Spleen (tissue), 13 donors: ENCODE measurements at regions of chr3 and their contacts with region 1.

Region 1: DNA sequence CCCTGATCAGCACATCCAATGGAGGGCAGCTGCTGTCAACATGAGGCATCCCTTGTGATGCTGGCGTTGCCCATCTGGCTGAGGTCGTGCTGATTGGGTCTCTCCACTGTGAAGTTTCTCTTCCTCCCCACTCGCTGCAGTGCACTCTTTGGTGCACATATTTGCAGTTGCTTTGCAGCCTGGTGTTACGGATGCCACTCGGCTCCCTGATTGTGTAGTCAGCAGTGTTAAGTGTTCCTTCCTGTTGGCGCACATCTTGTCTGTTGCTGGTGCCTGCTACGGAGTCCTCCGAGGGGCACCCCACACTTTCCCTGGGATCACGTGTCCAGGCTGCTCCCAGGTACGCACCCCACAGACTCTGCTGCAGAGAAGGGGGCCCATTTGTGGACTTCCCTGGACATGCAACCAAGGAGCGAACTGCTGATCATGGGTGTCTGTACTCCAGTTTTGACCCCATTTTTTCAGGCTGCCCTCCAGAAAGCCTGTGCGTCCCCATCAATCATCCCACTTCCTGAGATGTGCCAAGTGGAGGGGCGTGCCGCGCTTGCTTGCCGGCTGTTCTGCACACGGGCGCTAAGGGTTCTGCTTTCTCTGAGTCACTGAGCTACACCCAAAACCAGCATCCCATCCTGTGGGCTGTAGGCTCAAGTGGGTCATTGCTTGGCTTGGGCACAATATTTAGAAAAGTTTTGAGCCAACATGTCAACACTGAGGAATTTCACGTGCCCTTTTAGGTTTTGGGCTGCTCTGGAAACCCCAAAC is 98.6 kb downstream of the FBLN2 start:
- DNase-seq: no peak
- H3K4me3 ChIP-seq: peak overlapping the region in 1 of 8 donors; percentile 22
- H3K27ac ChIP-seq: no peak overlapping the region
- H3K4me1 ChIP-seq: peaks cover 19 to 49% (median 35%) of the 10 kb centered on the region in 6 donors
- H3K27me3 ChIP-seq: peaks cover 0 to 59% (median 6%) of the 10 kb centered on the region in 7 donors
- CTCF ChIP-seq: no peak
- POLR2A ChIP-seq: no peak

Region 2: GRCh38 chr3:12706504-12707253 is 940.8 kb before region 1 on chr3:
- intact Hi-C with region 1: no loop called
- DNase-seq: no peak
- H3K4me3 ChIP-seq: no peak overlapping the region
- H3K27ac ChIP-seq: peak overlapping the region in 1 of 8 donors; percentile 12
- H3K4me1 ChIP-seq: peaks cover 0 to 7% (median 0%) of the 10 kb centered on the region in 6 donors
- H3K27me3 ChIP-seq: no peaks in the 10 kb centered on the region
- CTCF ChIP-seq: peak; percentile 44 to 87 (median 59)
- POLR2A ChIP-seq: no peak

Region 3: DNA sequence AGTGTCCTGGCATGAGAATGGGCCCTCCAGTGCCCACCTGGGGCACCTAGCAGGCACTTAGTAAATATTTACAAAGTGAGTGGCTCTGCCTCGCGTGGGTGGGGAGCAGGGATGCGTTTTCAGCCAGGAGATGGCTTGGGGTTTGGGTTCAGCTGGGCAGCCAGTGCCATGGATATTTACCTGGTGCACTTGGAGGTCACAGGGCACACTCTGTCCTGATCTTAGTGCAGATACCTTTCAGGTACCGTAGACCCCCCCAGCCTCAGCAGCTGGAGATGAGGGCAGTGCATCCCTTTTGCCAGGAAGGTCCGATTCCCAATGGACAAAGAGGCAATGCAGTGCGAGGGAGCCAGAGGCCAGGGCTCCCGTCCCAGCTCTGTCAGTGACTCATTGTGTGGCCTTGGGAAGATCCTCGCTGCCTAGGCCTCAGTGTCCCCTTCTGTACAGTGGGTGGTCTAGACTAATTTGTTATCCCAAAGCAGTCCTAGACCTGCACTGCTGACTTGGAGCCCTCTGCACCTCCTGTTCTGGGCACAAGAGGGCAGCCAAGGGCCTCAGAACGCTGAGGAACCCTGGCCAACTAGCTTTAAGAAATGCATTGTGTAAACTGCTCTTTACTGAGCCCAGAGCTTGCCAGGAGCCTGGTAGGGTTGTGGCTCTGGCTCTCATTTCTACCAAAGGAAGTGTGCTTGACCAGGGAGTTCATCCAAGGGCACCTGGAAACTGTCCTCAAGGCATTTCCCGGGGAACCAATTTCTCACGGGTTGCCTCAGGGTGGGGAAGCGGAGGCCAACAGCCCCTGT is 151.4 kb before region 1 on chr3:
- intact Hi-C with region 1: loop called (anchors 2 kb)
- DNase-seq: peak; percentile 88
- H3K4me3 ChIP-seq: no peak overlapping the region
- H3K27ac ChIP-seq: no peak overlapping the region
- H3K4me1 ChIP-seq: peaks cover 0 to 16% (median 7%) of the 10 kb centered on the region in 6 donors
- H3K27me3 ChIP-seq: no peaks in the 10 kb centered on the region
- CTCF ChIP-seq: peak; percentile 83 to 96 (median 92)
- POLR2A ChIP-seq: no peak

Region 4: DNA sequence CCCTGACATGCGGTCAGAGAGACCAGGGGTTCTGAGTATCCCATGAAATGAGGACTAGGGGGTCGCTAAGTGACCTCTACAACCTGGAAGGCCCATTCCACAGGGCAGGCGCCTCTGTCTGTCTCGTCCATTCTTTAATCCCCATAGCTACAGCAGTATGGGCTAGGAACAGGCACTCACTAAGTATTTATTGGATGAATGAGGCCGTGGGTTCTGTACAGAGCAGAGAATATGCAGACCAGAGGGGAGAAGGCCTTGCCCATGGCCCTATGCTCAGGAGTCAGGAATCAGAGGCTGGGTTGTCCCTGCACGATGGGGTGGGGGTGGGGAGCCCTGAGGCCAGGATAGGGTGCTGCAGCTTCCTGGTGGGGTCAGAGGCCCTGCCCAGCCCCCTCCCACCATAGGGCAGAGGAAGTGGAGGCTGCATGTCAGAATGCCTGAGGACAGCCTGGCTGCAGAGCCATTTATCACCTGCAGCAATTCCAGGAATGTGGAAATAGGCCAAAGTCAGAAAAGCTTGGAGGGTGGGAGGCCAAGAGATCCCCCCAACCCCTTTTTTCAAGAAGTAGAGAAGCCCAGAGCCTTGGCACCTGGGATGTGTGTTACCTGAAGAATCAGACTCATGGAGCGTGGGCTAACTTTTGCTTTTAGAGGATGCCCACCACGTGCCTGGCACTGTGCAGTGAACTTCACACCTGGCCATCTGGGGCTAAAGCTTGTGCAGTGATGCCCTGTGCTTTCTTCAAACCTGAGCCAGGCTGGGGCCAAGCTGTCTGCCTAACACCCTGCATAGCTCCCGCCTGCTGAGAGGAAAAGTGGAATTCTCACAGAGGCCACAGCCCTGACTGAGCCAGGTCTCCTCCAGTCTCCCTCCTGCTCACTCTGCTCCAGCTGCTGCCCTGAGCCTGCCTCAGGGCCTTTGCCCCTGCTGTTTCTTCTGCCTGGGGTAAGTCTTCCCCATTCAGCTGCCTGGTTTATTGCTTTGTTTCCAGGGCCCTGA is 123.0 kb after region 1 on chr3:
- intact Hi-C with region 1: no loop called
- DNase-seq: no peak
- H3K4me3 ChIP-seq: no peak overlapping the region
- H3K27ac ChIP-seq: no peak overlapping the region
- H3K4me1 ChIP-seq: no peaks in the 10 kb centered on the region
- H3K27me3 ChIP-seq: peaks cover 0 to 24% (median 0%) of the 10 kb centered on the region in 7 donors
- CTCF ChIP-seq: no peak
- POLR2A ChIP-seq: no peak

Region 5: DNA sequence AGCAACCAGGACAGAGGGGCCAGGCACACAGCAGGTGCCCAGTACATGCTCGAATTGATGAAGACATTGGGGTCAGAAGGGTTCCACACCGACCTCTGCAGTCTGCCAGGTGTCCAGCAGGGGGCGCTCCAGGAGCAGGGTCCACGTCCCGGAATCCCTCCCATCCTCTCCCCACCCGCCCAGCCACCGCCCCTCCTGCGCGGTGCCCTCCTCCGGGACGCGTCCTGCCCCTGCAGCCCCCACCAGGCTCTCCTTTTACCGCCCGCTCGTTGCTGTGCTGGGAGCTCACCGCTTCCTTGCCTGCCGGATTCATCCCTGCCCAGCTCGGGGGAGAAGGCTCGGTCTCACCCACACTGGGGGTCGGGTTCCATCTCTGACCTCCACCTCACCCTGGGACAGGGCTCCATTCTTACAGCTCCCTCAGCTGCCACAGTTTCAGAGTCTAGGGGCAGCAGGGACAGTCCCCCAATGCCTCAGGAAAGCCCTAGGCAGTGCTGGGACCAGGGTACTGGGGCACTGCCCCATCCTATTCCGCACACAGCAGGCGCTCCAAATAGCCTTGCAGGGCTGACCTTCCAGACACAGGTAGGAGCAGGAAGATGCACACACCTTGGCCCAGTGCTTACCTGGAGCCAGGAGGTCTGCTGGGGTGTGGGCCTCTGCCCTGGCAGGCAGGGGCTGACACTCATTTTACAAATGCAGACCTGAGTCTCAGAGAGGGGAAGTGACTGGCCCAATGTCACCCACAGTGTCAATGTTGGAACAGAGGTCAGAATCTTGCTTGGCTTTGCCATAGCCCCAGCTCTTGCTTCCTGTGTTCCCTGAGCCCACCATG is 861.7 kb after region 1 on chr3:
- intact Hi-C with region 1: no loop called
- DNase-seq: peak; percentile 92
- H3K4me3 ChIP-seq: peak overlapping the region in 1 of 8 donors; percentile 31
- H3K27ac ChIP-seq: no peak overlapping the region
- H3K4me1 ChIP-seq: peaks cover 0 to 9% (median 4%) of the 10 kb centered on the region in 6 donors
- H3K27me3 ChIP-seq: peaks cover 0 to 12% (median 0%) of the 10 kb centered on the region in 7 donors
- CTCF ChIP-seq: peak; percentile 48 to 95 (median 86)
- POLR2A ChIP-seq: no peak